ENCODE measurements at regions of chr4 and their contacts with region 1.

Region 1: DNA sequence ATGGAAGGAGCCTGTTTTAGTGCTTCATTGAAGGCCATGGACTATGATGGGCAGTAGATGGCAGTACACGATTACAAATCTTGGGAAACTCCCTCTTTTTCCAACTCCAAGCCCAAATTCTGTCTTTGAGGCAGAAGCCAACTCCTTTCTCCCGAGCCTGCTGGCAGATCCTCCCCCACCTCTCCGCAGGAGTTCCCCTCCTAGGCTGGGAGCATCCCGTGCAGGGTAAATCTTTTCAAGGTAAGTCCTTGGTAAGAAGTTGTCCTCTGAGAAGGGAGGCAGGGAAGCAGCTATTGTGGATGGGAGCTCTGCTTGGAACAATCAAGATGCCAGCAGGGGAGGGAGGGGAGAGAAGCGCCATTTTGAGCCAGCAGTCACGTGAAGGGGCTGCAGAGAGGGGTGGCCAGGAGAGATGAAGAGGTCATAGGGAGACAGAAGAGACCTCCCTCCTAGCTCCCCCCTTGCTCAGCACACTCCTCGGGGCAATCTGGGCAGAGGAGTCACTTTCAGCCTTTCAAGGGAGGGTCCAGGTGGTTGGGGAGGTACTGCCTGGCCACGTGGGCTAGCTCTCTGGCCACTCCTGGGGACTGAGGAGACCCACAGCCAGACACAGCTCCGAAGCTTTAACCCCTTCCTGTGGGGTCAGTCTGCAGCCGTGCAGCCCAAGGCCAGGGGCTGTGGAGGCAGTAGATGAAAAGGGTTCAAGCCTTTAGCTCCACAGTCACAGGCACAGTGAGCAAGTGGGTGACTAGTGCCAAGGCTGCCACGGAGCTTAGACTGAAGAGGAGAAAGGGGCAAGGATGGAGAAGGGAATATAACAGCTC is 9.6 kb downstream of the CC2D2A start:
- DNase-seq: no peak
- H3K4me3 ChIP-seq: peak overlapping the region; percentile 51 to 71
- H3K27ac ChIP-seq: peak overlapping the region; percentile 76 to 78
- H3K4me1 ChIP-seq: peaks cover 3 to 10% of the 10 kb centered on the region in 2 donors
- H3K27me3 ChIP-seq: no peaks in the 10 kb centered on the region
- CTCF ChIP-seq: peak; percentile 59 to 70 (median 68)

Region 2: GRCh38 chr4:15436513-15436912 is 42.8 kb before region 1 on chr4:
- intact Hi-C with region 1: no loop called
- DNase-seq: no peak
- H3K4me3 ChIP-seq: no peak overlapping the region
- H3K27ac ChIP-seq: peak overlapping the region; percentile 13 to 37
- H3K4me1 ChIP-seq: peaks cover 5 to 25% of the 10 kb centered on the region in 2 donors
- H3K27me3 ChIP-seq: no peaks in the 10 kb centered on the region
- CTCF ChIP-seq: no peak

Region 3: GRCh38 chr4:15459706-15460105 is 19.6 kb before region 1 on chr4:
- intact Hi-C with region 1: no loop called
- DNase-seq: no peak
- H3K4me3 ChIP-seq: no peak overlapping the region
- H3K27ac ChIP-seq: peak overlapping the region; percentile 61 to 76
- H3K4me1 ChIP-seq: peaks cover 8 to 45% of the 10 kb centered on the region in 2 donors
- H3K27me3 ChIP-seq: no peaks in the 10 kb centered on the region
- CTCF ChIP-seq: no peak

Region 4: GRCh38 chr4:15681207-15682015 is 202.1 kb after region 1 on chr4 and contains the start of gene FAM200B:
- intact Hi-C with region 1: loop called (anchors 2 kb)
- DNase-seq: peak; percentile 90 to 99
- H3K4me3 ChIP-seq: peak within 1 kb of the TSS; percentile 80 to 82
- H3K27ac ChIP-seq: peak within 1 kb of the TSS; percentile 85 to 96
- H3K4me1 ChIP-seq: peaks cover 2 to 4% of the 10 kb centered on the region in 2 donors
- H3K27me3 ChIP-seq: no peaks in the 10 kb centered on the region
- CTCF ChIP-seq: peak in 1 of 3 experiments; percentile 12
- total RNA-seq, gene FAM200B: 34.9 TPM

Region 5: DNA sequence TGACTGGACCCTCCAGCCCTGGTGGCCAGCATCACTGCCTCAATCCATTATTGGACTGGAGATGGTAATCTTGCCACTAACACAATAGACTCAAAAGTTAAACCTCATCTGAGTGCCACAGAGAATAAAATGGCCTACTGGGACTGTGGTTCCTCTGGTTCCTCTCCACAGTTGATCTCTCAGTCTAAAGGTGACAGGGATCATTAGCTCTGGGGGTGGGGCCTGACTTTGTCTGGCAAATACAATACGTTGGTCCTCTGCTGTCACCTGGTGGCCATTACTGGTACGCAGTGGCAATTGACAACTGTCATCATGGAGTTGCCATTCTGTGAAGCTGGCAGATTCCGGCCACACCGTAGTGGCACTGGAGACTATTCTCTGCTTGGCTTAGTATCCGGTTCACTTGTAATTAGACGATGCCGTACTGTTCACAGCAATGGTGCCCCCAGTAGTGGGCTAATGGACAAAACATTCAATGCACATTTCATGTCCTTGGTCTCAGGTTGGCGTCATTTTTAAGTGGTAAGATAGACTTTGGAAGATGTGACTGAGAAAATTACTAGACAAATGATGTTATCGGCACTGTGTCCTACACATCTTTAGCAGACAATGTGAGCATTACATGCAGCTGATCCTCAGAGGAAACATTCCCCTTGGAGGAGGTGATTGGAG is 477.0 kb after region 1 on chr4:
- intact Hi-C with region 1: loop called (anchors 2 kb)
- DNase-seq: peak; percentile 36 to 86
- H3K4me3 ChIP-seq: no peak overlapping the region
- H3K27ac ChIP-seq: no peak overlapping the region
- H3K4me1 ChIP-seq: no peaks in the 10 kb centered on the region
- H3K27me3 ChIP-seq: no peaks in the 10 kb centered on the region
- CTCF ChIP-seq: peak; percentile 73 to 87 (median 86)